AG04449 (cell line): ENCODE measurements at regions of chr12 and their contacts with region 1.

Region 1: DNA sequence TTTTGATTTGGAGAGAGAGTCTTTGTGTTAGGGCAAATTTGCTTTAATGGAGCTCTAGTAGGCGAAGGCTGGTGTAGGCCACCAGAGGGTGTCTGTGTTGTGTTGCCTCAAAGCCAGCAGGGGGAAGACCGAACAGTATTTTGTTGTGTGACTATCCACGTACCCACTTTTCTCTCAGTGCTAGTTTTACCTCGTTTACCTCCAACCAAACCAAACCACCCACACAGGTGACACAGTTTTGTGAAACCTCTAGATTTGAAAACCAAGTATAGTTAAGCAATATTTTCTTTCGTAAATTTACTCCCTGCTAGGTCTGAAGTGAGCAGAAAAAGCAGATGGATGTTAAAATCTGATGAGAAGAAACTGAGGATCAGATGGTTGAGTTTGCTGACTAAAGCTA is 36.3 kb upstream of the NPFF start:
- DNase-seq: no peak
- H3K4me3 ChIP-seq: no peak overlapping the region
- CTCF ChIP-seq: peak; percentile 95

Region 2: GRCh38 chr12:52924764-52925716 is 618.5 kb before region 1 on chr12:
- CTCF ChIA-PET with region 1: no interaction called
- POLR2A ChIA-PET with region 1: no interaction called
- DNase-seq: peak; percentile 86
- H3K4me3 ChIP-seq: no peak overlapping the region
- CTCF ChIP-seq: no peak

Region 3: GRCh38 chr12:53365245-53365904 is 178.2 kb before region 1 on chr12:
- CTCF ChIA-PET with region 1: no interaction called
- POLR2A ChIA-PET with region 1: no interaction called
- DNase-seq: no peak
- H3K4me3 ChIP-seq: no peak overlapping the region
- CTCF ChIP-seq: no peak

Region 4: DNA sequence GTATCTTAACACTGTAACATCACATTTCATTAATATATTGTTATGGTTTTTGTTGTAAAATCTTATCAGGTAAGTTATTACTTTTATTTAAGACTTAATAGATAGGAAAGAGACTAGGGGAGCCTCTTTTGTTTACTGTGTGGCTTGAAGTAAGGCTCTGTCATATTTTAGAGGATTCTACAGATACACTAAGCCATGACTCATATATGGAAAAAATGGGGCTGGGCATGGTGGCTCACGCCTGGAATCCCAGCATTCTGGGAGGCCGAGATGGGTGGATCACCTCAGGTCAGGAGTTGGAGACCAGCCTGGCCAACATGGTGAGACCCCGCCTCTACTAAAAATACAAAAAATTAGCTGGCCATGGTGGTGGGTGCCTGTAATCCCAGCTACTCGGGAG is 12.6 kb before region 1 on chr12:
- CTCF ChIA-PET with region 1: interaction called, 44 read pairs
- POLR2A ChIA-PET with region 1: no interaction called
- DNase-seq: no peak
- H3K4me3 ChIP-seq: no peak overlapping the region
- CTCF ChIP-seq: no peak

Region 5: DNA sequence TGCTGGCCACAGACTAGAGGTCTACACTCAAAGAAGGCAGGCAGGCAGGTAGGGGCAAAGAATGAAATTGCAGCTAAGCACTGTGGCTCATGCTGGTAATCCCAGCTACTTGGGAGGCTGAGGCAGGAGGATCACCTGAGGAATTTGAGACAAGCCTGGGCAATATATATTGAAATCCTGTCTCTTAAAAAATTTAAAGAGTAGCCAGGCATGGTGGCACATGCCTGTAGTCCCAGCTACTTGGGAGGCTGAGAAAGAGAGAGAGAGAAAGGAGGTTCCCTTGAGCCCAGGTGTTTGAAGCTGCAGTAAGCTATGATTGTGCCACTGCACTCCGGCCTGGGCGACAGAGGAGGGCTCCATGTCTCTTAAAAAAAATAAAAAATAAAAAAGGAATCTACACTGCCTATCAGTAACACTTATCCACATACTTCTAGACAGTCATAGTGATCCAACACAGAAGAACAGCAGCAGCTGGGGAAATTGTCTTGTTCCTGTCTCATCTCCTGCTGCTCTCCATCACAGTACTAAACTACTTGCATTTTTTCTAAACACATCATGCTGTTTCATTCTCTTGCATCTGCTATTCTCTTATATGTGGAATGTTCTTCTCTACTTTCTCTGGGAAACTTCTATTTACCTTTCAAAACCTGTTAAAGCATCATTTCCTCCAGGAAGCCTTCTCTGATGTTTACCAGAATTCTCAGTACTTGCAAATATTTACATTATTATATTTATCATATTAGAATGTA is 25.4 kb after region 1 on chr12:
- CTCF ChIA-PET with region 1: interaction called, 16 read pairs
- POLR2A ChIA-PET with region 1: interaction called, 6 read pairs
- DNase-seq: no peak
- H3K4me3 ChIP-seq: no peak overlapping the region
- CTCF ChIP-seq: no peak

Region 6: GRCh38 chr12:53618275-53618674 is 74.7 kb after region 1 on chr12:
- CTCF ChIA-PET with region 1: interaction called, 26 read pairs
- POLR2A ChIA-PET with region 1: no interaction called
- DNase-seq: no peak
- H3K4me3 ChIP-seq: no peak overlapping the region
- CTCF ChIP-seq: no peak

Region 7: GRCh38 chr12:53659011-53659551 is 115.5 kb after region 1 on chr12:
- CTCF ChIA-PET with region 1: interaction called, 17 read pairs
- POLR2A ChIA-PET with region 1: interaction called, 4 read pairs
- DNase-seq: no peak
- H3K4me3 ChIP-seq: no peak overlapping the region
- CTCF ChIP-seq: no peak